OCI-LY7 (cell line): ENCODE measurements at regions of chr4 and their contacts with region 1.

Region 1: GRCh38 chr4:101169044-101170014 is 178.0 kb downstream of the PPP3CA start:
- DNase-seq: peak; percentile 73
- H3K4me3 ChIP-seq: no peak overlapping the region
- H3K27ac ChIP-seq: no peak overlapping the region
- H3K4me1 ChIP-seq: peaks cover 6% of the 10 kb centered on the region
- CTCF ChIP-seq: peak; percentile 81

Region 2: GRCh38 chr4:101288365-101289145 is 119.2 kb after region 1 on chr4:
- CTCF ChIA-PET with region 1: no interaction called
- POLR2A ChIA-PET with region 1: interaction called, 11 read pairs
- intact Hi-C with region 1: no loop called
- DNase-seq: no peak
- H3K4me3 ChIP-seq: no peak overlapping the region
- H3K27ac ChIP-seq: no peak overlapping the region
- H3K4me1 ChIP-seq: no peaks in the 10 kb centered on the region
- CTCF ChIP-seq: no peak

Region 3: DNA sequence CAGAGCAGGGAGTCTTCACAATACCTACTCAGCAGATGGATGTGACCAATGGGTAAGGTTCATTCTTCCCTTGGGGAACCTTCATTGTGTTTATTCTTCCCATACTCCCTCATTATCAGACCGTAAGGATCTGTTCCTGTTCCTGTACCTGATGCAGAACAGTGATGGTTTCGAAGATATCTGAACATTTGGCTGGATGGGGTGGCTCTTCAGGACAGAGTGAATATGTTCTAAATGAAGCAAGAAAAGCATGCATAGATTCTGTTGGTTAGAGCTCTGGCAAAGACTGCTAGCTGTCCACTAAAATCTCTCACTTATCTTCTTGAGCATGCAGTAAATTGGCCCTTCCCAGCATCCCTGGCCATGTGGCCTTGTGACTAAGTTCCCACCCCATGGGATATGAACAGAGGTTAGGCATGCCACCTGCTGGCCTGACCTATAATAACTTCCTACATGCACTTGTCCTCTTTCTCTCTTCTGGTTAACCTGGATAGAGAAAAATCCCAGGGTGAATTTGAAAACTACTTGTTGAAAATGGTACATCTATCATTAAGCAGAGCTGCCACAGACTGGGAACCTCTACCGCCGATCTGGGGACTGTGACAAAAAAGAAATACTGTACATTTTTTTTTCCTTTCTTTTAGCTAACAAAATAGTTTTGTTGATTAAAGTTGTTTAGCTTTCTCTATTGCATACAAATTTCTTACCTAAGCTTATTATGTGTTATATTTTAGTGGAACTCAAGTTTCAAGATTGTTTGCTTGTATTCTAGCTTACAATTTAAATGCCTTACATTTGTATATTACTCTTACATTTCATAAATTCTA is 561.2 kb after region 1 on chr4:
- CTCF ChIA-PET with region 1: no interaction called
- POLR2A ChIA-PET with region 1: interaction called, 3 read pairs
- intact Hi-C with region 1: loop called (anchors 1 kb)
- DNase-seq: peak; percentile 51
- H3K4me3 ChIP-seq: no peak overlapping the region
- H3K27ac ChIP-seq: no peak overlapping the region
- H3K4me1 ChIP-seq: no peaks in the 10 kb centered on the region
- CTCF ChIP-seq: peak; percentile 84

Region 4: DNA sequence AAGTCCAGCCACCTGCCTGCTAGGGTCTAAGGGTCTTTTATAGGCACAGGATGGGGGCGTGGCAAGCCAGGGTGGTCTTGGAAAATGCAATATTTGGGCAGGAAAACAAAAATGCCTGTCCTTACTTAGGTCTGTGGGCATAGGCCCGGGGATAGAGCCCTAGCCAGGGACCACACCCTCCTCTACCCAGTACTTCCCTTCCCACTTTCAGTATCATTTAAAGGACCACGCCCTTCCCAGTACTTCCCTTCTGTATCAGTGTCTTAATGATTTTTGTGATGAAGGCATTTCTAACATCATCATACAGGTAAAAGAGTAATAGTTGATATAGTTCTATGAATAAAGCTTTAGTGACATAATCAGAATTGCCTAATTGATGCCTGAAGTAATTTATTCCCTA is 632.6 kb after region 1 on chr4:
- CTCF ChIA-PET with region 1: no interaction called
- POLR2A ChIA-PET with region 1: no interaction called
- intact Hi-C with region 1: no loop called
- DNase-seq: no peak
- H3K4me3 ChIP-seq: no peak overlapping the region
- H3K27ac ChIP-seq: no peak overlapping the region
- H3K4me1 ChIP-seq: peaks cover 7% of the 10 kb centered on the region
- CTCF ChIP-seq: no peak